ENCODE measurements at regions of chr10 and their contacts with region 1.

Region 1: DNA sequence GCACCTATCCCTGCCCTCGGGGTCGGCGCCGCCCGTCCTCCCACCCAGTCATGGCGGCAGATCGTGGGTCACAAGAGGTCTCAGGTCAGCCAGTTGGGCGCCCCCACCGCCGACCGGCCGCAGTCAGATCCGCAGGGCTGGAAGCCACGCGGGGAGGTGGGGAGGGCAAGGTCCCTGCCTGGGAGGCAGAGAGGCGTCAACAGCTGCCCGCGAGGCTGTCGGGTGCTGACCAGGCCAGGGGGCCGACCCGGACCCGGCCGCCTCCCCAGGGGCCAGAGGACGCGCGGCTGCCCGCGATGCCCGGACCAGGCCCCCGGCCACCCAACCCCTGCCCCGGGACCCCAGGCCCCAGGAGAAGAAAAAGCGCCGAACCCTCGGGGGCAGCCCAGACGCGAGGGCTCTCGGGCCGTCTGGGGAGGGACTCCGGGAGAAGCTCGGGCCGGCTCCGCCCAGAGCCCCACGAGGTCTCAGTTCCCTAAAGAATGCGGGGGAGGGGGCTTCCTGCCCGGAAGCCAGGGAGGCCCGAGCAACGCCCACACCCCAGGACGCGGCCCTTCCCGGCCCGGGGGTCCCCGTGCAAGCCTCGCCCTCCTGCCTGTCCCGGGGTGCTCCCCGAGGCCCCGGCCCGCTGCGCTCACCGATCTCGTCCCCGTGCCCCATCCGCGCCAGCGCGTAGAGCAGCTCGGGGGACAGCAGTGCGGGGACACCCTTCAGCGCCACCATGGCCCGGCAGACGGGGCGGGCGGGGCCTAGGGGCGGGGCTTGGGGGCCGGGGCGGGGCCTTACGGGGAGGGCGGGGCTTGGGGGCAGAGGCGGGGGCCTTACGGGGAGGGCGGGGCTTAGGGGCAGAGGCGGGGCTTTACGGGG is at the start of gene FUOM:
- DNase-seq: peak; percentile 91 to 94
- H3K4me3 ChIP-seq: peak within 1 kb of the TSS; percentile 62
- H3K4me3 Mint-ChIP-seq: peak within 1 kb of the TSS; percentile 81
- H3K27ac Mint-ChIP-seq: peak within 1 kb of the TSS; percentile 85
- H3K4me1 ChIP-seq: peaks cover 39% of the 10 kb centered on the region
- H3K4me1 Mint-ChIP-seq: peaks cover 26% of the 10 kb centered on the region
- H3K27me3 ChIP-seq: no peaks in the 10 kb centered on the region
- H3K27me3 Mint-ChIP-seq: no peaks in the 10 kb centered on the region
- CTCF ChIP-seq: no peak
- total RNA-seq, gene FUOM: 108 and 119 TPM in 2 replicates

Region 2: DNA sequence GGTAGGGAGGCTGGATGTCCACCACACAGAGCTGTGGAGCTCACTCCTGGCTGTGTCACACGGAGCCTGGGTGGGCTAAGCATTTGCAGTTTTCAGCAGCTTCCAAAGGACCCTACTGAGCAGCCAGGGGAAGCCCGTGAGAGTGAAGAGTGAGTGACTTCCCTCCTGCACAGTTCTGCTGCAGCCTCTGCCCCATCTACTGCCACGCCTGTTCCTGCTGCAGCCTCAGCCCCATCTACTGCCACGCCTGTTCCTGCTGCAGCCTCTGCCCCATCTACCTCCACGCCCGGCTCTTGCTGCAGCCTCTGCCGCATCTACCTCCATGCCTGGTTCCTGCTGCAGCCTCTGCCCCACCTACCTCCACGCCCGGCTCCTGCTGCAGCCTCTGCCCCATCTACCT is 93.1 kb before region 1 on chr10:
- CTCF ChIA-PET with region 1: no interaction called
- POLR2A ChIA-PET with region 1: no interaction called
- intact Hi-C with region 1: no loop called
- DNase-seq: no peak
- H3K4me3 ChIP-seq: no peak overlapping the region
- H3K4me3 Mint-ChIP-seq: no peak overlapping the region
- H3K27ac Mint-ChIP-seq: no peak overlapping the region
- H3K4me1 ChIP-seq: peaks cover 18% of the 10 kb centered on the region
- H3K4me1 Mint-ChIP-seq: peaks cover 5% of the 10 kb centered on the region
- H3K27me3 ChIP-seq: no peaks in the 10 kb centered on the region
- H3K27me3 Mint-ChIP-seq: no peaks in the 10 kb centered on the region
- CTCF ChIP-seq: no peak

Region 3: GRCh38 chr10:133302209-133302608 is 55.3 kb before region 1 on chr10:
- CTCF ChIA-PET with region 1: interaction called, 11 read pairs
- POLR2A ChIA-PET with region 1: no interaction called
- intact Hi-C with region 1: no loop called
- DNase-seq: no peak
- H3K4me3 ChIP-seq: no peak overlapping the region
- H3K4me3 Mint-ChIP-seq: no peak overlapping the region
- H3K27ac Mint-ChIP-seq: no peak overlapping the region
- H3K4me1 ChIP-seq: peaks cover 2% of the 10 kb centered on the region; the same call in 1 of the 2 replicates
- H3K4me1 Mint-ChIP-seq: peaks cover 9% of the 10 kb centered on the region
- H3K27me3 ChIP-seq: no peaks in the 10 kb centered on the region
- H3K27me3 Mint-ChIP-seq: no peaks in the 10 kb centered on the region
- CTCF ChIP-seq: no peak

Region 4: DNA sequence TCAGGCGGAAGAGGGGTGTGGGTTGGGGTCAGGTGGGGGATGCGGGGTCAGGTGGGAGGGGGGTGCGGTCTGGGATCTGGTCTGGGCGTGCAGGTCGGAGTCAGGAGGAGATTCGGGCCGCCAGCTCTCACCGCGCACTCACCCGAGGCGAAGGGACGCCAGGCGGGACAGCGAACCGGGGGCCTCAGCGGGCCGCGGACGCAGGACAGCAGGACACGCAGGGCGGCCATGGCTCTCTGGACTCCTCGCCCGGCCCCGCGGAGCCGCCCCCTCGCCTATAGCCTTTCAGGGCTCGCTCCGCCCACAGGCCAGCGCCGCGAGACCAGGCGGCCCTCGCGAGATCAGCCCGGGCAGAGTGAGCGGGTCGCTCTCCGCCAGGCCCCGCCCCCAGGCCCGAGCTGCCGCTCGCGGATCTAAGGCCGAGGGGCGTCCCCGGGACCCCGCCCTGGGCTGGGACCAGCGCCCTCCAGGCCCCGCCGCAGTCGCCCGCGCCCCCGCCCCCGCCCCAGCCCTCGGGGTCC is 15.6 kb after region 1 on chr10 and contains the start of gene ECHS1:
- CTCF ChIA-PET with region 1: interaction called, 4 read pairs
- POLR2A ChIA-PET with region 1: interaction called, 5 read pairs
- intact Hi-C with region 1: loop called (anchors 1 kb)
- DNase-seq: peak; percentile 96 to 100
- H3K4me3 ChIP-seq: peak within 1 kb of the TSS; percentile 100
- H3K4me3 Mint-ChIP-seq: peak within 1 kb of the TSS; percentile 87
- H3K27ac Mint-ChIP-seq: peak within 1 kb of the TSS; percentile 92
- H3K4me1 ChIP-seq: peaks cover 22% of the 10 kb centered on the region
- H3K4me1 Mint-ChIP-seq: no peaks in the 10 kb centered on the region
- H3K27me3 ChIP-seq: no peaks in the 10 kb centered on the region
- H3K27me3 Mint-ChIP-seq: no peaks in the 10 kb centered on the region
- CTCF ChIP-seq: no peak
- total RNA-seq, gene ECHS1: 232 and 247 TPM in 2 replicates

Region 5: GRCh38 chr10:133394064-133394663 is 36.6 kb after region 1 on chr10 and contains the start of gene MTG1:
- CTCF ChIA-PET with region 1: interaction called, 3 read pairs
- POLR2A ChIA-PET with region 1: no interaction called
- intact Hi-C with region 1: loop called (anchors 1 kb)
- DNase-seq: peak; percentile 95 to 100
- H3K4me3 ChIP-seq: peak within 1 kb of the TSS; percentile 79
- H3K4me3 Mint-ChIP-seq: peak within 1 kb of the TSS; percentile 81
- H3K27ac Mint-ChIP-seq: peak within 1 kb of the TSS; percentile 86
- H3K4me1 ChIP-seq: 0 out of 2 replicates have a peak, but pooled peaks cover 4% of the 10 kb centered on the region
- H3K4me1 Mint-ChIP-seq: no peaks in the 10 kb centered on the region
- H3K27me3 ChIP-seq: no peaks in the 10 kb centered on the region
- H3K27me3 Mint-ChIP-seq: no peaks in the 10 kb centered on the region
- CTCF ChIP-seq: peak in 1 of 2 experiments; percentile 54
- total RNA-seq, gene MTG1: 111 and 113 TPM in 2 replicates

Measured in Caco-2 (cell line).